ENCODE measurements at regions of chr20 and their contacts with region 1.

Region 1: DNA sequence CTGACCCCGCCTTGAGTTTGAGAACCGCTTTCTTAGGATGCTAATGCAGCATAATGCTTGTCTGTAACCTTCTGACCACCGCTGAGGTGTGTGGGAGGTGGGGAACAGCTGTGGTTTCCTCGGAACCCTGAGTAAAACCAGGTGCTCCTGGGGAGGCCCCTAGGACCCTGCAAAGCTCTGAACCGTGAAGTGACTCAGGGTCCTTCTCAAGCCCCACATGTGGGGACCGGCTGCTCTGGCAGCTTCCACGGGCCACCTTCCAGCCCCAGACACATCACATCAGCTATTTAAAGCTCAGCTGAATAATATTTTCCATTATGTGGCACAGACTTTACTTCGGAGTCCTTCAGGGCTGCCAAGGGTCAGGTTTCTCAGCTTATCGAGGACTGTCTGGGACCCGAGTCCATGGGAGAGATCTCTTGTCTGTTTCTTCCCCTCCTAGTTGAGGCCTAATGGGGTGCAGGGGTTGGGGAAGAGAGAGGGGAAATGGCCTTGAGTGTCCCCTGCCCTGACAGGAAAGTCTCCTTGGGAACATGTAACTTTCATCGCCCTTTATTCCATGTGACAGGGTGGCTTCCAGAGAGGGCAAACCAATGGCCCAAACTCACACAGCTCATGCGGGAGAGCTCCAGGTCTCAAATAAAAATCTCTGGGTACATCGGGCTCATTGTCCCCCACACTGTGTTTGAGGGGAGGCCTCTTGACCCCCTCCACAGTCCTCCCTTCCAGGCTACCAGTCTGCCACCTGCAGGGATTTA is 186.1 kb upstream of the SLC24A3 start:
- DNase-seq: no peak
- ATAC-seq: peak in 1 of 3 donors; percentile 17
- H3K4me3 ChIP-seq: no peak overlapping the region
- H3K4me3 Mint-ChIP-seq: no peak overlapping the region
- H3K27ac ChIP-seq: no peak overlapping the region
- H3K27ac Mint-ChIP-seq: no peak overlapping the region
- H3K4me1 ChIP-seq: no peaks in the 10 kb centered on the region
- H3K4me1 Mint-ChIP-seq: no peaks in the 10 kb centered on the region
- H3K27me3 ChIP-seq: no peaks in the 10 kb centered on the region
- H3K27me3 Mint-ChIP-seq: peaks cover 3 to 4% of the 10 kb centered on the region in 2 donors
- CTCF ChIP-seq: no peak

Region 2: DNA sequence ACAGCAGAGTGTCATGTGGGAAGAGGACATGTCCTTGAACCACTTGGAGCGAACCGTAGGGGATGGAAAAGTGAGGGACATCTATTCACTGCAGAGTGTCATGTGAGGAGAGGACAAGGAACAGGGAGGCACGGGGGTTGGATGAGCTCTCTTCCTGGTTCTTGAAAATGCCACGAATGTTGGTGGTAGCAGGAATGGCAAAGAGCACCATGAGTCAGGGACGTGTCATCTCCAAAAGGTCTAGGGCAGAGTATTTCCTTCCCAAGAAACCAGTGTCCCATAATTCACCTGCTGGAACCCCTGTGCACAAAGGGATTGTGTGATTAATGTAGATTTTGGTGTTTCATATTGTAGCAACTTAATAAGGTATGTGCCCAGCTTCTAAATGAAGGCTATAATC is 1631.9 kb before region 1 on chr20:
- intact Hi-C with region 1: loop called (anchors 5 kb)
- DNase-seq: no peak
- ATAC-seq: no peak
- H3K4me3 ChIP-seq: no peak overlapping the region
- H3K4me3 Mint-ChIP-seq: no peak overlapping the region
- H3K27ac ChIP-seq: no peak overlapping the region
- H3K27ac Mint-ChIP-seq: no peak overlapping the region
- H3K4me1 ChIP-seq: no peaks in the 10 kb centered on the region
- H3K4me1 Mint-ChIP-seq: no peaks in the 10 kb centered on the region
- H3K27me3 ChIP-seq: no peaks in the 10 kb centered on the region
- H3K27me3 Mint-ChIP-seq: peaks cover 7 to 30% of the 10 kb centered on the region in 2 donors
- CTCF ChIP-seq: no peak

Region 3: GRCh38 chr20:19317237-19318069 is 291.2 kb after region 1 on chr20:
- intact Hi-C with region 1: no loop called
- DNase-seq: peak in 1 of 2 donors; percentile 14
- ATAC-seq: peak; percentile 73 to 84 (median 77)
- H3K4me3 ChIP-seq: no peak overlapping the region
- H3K4me3 Mint-ChIP-seq: peak overlapping the region; percentile 29
- H3K27ac ChIP-seq: no peak overlapping the region
- H3K27ac Mint-ChIP-seq: peak overlapping the region in 1 of 2 donors; percentile 77
- H3K4me1 ChIP-seq: peaks cover 29% of the 10 kb centered on the region
- H3K4me1 Mint-ChIP-seq: peaks cover 34 to 41% of the 10 kb centered on the region in 2 donors
- H3K27me3 ChIP-seq: no peaks in the 10 kb centered on the region
- H3K27me3 Mint-ChIP-seq: peaks cover 0 to 2% of the 10 kb centered on the region in 2 donors
- CTCF ChIP-seq: no peak

Measured in natural killer cell (primary cell).